Right cardiac atrium (tissue), 5 donors: ENCODE measurements at regions of chr19 and their contacts with region 1.

Region 1: DNA sequence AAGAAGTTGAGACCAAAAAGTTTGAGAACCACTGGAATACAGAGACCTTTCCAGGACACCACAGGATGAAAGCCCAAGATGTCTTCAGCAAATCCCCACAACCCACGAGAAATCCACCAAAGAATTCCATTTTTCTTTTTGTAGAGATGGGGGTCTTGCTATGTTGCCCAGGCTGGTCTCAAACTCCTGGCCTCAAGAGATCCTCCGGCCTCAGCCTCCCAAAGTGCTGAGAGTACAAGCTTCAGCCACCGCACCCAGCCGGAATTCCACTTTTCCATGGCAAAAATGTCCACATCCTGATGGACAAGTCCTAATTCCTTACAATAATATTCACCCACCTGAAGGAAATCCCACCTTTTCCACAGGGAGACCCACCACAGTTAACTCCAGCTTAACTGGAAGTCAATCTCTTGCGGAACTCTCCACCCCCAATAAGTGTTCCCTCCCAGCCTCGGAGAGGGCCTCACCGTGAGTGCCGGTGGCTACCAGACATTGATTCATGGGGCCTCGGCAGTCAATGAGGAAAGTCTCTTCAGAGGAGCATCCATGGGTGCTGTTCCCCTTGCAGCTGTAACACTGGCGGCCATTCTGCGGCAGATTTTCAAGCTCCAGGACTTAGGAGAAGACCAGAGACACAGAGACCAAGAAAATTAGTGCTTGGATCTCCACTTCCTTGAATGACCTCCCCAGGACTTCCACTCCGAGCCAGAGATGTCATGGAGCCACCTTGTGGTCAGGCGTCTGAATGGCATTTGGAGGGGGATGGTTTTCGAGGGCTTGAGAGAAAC is 12.3 kb upstream of the CADM4 start:
- DNase-seq: peak; percentile 42 to 75 (median 67)
- ATAC-seq: peak; percentile 69 to 76
- H3K4me3 ChIP-seq: no peak overlapping the region
- H3K27ac ChIP-seq: peak overlapping the region; percentile 22
- H3K4me1 ChIP-seq: no peaks in the 10 kb centered on the region
- H3K27me3 ChIP-seq: no peaks in the 10 kb centered on the region

Region 2: DNA sequence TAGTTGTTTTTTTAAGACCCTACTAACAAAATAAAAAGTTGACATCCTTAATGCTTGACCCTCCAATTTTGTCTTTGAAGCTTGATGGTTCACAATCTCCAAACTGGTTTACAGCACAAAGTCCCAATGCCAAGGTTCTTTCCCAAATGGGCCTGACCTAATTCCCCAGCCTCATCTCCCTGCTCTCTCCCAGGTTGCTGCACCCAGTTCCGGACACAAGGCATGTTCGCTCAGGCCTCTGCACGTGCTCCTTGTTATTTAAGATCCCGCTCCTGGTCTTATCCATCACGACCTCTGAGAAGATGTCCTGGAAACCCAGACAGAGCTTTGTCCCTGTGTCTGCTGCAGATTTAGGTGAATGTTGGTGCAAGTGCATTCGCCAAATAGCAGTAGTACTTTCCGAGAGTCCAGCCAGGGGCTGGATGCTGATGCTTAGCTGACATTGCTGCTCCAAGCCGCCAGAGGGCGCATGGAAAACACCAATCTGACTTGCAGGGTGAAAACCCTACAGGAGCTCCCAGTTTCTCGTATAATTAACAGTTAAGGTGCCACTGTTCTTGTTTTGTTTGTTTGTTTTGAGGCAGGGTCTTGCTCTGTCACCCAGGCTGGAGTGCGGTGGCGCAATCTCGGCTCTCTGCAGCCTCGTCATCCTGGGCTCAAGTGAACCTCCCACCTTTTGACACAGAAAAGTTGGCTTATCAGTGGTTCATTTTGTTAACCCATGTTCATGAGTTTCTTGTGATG is 205.0 kb before region 1 on chr19:
- intact Hi-C with region 1: loop called in 1 of 4 experiments (anchors 10 kb)
- DNase-seq: peak; percentile 75 to 89 (median 87)
- ATAC-seq: peak; percentile 82 to 83
- H3K4me3 ChIP-seq: no peak overlapping the region
- H3K27ac ChIP-seq: no peak overlapping the region
- H3K4me1 ChIP-seq: no peaks in the 10 kb centered on the region
- H3K27me3 ChIP-seq: no peaks in the 10 kb centered on the region

Region 3: DNA sequence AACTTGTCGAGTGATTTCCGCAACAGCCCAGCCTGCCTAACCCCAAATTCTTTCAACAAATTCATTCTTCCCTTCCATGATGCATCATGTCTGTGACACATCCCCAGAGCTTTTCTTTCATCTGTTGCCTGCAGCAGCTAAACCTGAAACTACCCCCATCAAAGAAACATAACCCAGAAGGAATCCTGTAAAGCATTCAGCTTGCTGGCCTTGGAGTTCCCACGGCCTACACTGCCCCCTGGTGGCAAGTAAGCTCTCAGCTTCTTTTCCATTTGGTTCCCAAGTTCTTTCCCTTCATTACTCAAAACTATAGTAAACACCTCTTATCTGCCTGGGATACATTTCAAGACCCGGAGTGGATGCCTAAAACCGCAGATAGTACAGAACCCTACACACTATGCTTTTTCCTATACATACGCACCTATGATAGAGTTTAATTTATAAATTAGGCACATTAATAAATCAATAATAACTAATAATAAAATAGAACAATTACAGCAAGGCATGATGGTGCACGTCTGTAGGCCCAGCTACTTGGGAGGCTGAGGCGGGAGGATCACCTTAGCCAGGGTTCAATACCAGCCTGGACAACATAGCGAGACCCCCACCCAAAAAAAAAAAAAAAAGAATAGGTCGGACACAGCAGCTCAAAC is 132.4 kb before region 1 on chr19:
- intact Hi-C with region 1: no loop called
- DNase-seq: peak; percentile 72 to 87 (median 87)
- ATAC-seq: peak; percentile 59 to 65
- H3K4me3 ChIP-seq: no peak overlapping the region
- H3K27ac ChIP-seq: no peak overlapping the region
- H3K4me1 ChIP-seq: no peaks in the 10 kb centered on the region
- H3K27me3 ChIP-seq: no peaks in the 10 kb centered on the region

Region 4: DNA sequence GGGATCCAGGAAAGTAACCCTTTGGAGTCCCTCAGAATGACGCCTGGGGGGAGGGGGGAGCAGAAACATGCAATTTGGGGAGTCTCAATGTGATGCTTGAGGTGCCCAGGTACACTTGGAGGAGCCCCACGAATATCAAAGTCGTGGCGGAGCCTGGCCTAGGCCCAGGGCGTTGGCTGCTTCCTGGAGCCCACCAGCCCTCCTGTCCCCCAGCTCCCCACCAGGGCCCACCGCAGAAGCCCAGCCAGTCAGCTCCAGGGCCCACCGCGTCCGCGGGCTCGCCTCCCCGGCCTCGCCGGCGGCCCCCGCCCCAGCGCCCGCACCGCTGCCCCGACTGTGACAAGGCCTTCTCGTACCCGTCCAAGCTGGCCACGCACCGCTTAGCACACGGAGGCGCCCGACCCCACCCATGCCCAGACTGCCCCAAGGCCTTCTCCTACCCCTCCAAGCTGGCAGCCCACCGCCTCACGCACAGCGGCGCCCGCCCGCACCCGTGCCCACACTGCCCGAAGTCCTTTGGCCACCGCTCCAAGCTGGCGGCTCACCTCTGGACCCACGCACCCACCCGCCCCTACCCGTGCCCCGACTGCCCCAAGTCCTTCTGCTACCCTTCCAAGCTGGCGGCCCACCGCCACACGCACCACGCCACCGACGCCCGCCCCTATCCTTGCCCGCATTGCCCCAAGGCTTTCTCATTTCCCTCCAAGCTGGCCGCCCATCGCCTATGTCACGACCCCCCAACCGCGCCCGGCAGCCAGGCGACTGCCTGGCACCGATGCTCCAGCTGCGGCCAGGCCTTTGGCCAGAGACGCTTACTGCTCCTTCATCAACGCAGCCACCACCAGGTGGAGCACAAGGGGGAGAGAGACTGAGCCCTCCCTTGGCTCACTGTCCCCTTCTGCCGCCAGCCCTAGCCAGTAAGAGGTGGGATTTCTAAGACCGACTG is 116.9 kb before region 1 on chr19:
- intact Hi-C with region 1: loop called in 2 of 4 experiments (anchors 5 kb)
- DNase-seq: peak; percentile 80 to 90 (median 88)
- ATAC-seq: peak; percentile 1 to 13
- H3K4me3 ChIP-seq: no peak overlapping the region
- H3K27ac ChIP-seq: no peak overlapping the region
- H3K4me1 ChIP-seq: no peaks in the 10 kb centered on the region
- H3K27me3 ChIP-seq: no peaks in the 10 kb centered on the region

Region 5: DNA sequence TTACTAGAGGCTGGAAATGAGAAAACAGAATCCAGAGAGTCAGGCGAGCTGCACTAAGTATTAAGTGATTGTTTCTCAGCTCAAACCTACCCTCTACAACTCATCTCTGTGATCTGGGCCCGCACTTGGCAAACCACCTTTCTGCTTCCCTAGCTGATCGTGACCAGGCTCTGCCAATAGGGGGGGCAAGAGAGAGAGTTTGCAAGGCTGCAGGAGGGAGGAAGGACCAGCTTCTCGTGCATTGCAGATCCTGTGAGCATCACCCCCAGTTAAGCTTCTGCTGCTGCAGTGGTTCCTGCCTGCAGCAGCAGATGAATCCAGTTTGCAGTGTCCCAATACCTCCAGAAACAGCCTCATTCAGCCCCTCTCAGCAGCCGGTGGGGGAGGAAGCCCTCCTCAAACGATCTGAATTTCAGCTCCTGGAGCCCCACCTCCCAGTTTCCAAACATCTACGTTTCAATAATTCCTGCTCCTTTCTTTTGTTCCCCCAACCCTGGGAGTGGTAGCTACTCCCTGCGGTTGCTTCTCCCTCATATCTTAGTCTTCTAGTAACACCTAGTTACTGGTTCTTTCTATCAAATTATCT is 96.7 kb before region 1 on chr19:
- intact Hi-C with region 1: loop called in 1 of 4 experiments (anchors 10 kb)
- DNase-seq: peak; percentile 58 to 76 (median 73)
- ATAC-seq: peak in 1 of 2 donors; percentile 71
- H3K4me3 ChIP-seq: no peak overlapping the region
- H3K27ac ChIP-seq: no peak overlapping the region
- H3K4me1 ChIP-seq: no peaks in the 10 kb centered on the region
- H3K27me3 ChIP-seq: no peaks in the 10 kb centered on the region

Region 6: GRCh38 chr19:43575156-43575950 is 76.6 kb before region 1 on chr19 and contains the starts of genes PINLYP and XRCC1:
- intact Hi-C with region 1: no loop called
- DNase-seq: peak; percentile 99
- ATAC-seq: peak; percentile 99
- H3K4me3 ChIP-seq: peak within 1 kb of the TSS; percentile 78
- H3K27ac ChIP-seq: peak within 1 kb of the TSS; percentile 59
- H3K4me1 ChIP-seq: peaks cover 1% of the 10 kb centered on the region
- H3K27me3 ChIP-seq: no peaks in the 10 kb centered on the region
- total RNA-seq, gene PINLYP: 3.8 to 6.8 (median 4.9) TPM
- total RNA-seq, gene XRCC1: 13.5 to 17.1 (median 15.6) TPM